ENCODE measurements at regions of chr10 and their contacts with region 1.

Region 1: GRCh38 chr10:121886997-121887622 is 40.7 kb downstream of the ATE1 start:
- DNase-seq: no peak

Region 2: DNA sequence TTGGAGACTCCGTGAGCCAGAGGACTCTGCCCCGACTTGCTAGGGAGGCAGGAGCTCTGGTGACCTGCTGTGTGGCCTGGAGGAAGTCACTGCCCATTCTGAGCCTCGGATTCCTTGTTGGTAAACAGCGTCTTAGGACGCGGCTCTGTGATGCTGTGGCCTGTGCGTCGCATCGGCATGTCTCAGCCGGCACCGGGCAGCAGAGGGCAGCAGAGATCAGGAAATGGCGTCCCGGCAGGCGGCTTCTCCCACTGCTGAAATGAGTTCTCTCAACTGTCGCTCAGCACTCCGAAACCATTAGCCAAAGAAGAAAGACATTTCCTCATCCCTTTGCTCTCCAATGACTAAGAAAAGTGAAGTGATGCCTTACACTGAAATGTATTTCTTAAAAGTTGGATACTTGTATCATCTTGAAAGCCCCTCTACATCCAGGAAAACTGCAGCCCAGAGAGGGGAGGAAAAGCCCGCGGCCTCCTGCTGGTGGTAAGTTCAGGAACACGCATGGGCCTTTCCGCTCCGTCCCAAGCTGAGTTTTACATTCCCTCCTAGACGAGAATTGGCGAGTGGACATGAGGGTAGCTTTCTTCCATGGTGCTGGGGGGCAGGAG is 944.2 kb before region 1 on chr10:
- intact Hi-C with region 1: loop called (anchors 5 kb)
- DNase-seq: peak; percentile 86

Region 3: DNA sequence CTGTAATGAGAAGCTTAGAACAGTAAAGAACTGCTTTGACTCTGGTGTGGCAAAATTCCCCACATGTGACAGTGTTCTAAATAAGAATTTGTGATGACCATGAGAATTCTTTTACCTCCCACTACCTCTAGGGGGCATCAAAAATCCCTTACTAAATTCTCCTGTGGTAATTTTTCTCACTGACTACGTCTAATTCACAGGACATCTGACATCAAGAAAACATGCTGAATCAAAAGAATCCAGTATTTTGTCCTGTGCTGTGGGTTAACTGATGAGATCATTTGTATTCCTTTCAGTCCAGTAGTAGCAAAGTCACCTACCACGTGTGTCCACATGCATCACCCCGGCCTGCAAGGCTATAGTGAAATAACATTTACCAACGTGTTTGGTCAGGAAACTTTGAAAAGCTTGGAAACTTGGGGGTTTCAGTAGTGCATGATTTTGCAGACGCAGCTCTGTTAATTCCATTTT is 63.1 kb before region 1 on chr10:
- intact Hi-C with region 1: loop called (anchors 5 kb)
- DNase-seq: no peak

Region 4: DNA sequence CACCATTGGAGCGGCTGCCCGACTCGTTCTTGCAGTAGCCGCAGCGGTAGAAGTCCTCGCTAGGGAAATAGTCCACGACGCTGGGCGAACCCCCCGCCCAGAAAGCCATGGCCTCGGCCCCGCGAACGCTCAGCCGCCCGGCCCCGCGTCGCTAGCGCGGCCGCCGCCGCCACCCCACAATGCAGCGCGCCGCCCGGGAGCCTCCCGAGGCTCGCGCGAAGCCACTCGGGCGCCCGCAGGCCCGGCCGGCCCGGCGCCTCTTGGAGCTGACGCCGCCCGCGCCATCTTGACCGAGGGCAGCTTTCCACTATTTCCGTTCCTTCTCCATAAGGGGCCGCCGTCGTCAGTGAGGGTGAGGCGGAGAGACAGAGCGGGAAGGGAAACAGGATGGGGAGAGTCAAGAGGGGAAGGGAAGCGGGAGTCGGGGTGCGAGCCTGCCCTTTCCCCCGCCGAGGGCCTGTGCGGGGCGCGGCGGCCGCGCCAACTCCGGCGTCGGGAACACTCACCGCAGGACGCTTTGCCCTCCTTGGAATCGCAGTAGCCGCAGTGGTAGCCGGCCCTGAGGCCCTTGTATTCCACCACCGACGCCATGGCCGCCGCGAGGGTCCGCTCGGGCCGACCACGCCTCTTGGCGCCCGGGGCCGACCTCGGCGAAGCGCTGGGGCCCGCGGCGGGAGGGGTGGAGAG is 40.9 kb after region 1 on chr10 and contains the start of gene ATE1:
- intact Hi-C with region 1: no loop called
- DNase-seq: peak; percentile 95
- total RNA-seq, gene ATE1: 38.1 TPM